Heart left ventricle (tissue), 16 donors: ENCODE measurements at regions of chr16 and their contacts with region 1.

Region 1: DNA sequence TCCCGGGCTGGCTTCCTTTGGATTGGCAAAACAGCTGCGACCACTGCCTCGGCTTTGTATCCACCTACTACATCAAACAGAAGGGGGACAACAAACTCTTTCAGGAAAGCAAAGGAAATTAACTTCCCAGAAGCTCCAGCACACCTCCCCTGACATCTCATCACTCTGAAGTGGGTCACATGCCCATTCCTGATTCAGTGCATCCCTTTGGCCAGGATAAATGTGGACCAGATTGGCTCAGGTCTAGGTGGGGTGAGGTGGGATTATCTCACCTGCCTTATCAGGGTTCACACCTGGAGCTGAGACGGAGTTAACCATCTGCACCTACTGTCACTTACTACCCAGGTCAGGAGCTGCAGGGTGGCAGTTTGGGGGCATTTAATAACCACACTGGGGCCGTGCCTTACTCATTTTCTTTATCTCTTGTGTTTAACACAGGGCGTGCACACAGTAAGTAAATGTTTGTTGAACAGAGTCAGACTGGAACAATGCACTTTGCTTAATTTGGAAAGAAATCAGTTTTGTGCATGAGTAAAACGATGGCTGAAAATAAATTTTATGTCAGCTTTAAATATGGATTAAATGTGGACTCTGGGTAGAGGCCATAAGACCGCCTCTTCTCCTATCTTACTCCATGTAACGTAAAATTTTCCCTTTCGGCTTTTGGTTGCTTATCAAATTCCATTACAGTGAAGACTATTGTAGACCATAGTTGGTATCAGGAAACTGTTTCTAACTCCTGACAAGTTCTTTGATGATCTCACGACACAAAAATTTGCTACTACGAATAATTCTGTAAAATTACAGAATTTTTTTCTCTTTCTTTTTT is 36.0 kb downstream of the IQCK start:
- DNase-seq: no peak
- ATAC-seq: peak in 3 of 4 donors; percentile 52 to 75 (median 63)
- H3K4me3 ChIP-seq: no peak overlapping the region
- H3K27ac ChIP-seq: peak overlapping the region in 11 of 12 donors; percentile 37 to 87 (median 71)
- H3K4me1 ChIP-seq: peaks cover 0 to 74% (median 40%) of the 10 kb centered on the region in 12 donors
- H3K27me3 ChIP-seq: no peaks in the 10 kb centered on the region
- CTCF ChIP-seq: no peak
- POLR2A ChIP-seq: no peak

Region 2: GRCh38 chr16:19696328-19696727 is 57.7 kb before region 1 on chr16:
- intact Hi-C with region 1: loop called in 2 of 10 experiments (anchors 5 to 10 kb)
- DNase-seq: peak; percentile 82 to 88 (median 86)
- ATAC-seq: peak; percentile 46 to 77 (median 61)
- H3K4me3 ChIP-seq: no peak overlapping the region
- H3K27ac ChIP-seq: peak overlapping the region; percentile 44 to 92 (median 82)
- H3K4me1 ChIP-seq: peaks cover 18 to 61% (median 45%) of the 10 kb centered on the region in 12 donors
- H3K27me3 ChIP-seq: no peaks in the 10 kb centered on the region
- CTCF ChIP-seq: no peak
- POLR2A ChIP-seq: no peak

Region 3: DNA sequence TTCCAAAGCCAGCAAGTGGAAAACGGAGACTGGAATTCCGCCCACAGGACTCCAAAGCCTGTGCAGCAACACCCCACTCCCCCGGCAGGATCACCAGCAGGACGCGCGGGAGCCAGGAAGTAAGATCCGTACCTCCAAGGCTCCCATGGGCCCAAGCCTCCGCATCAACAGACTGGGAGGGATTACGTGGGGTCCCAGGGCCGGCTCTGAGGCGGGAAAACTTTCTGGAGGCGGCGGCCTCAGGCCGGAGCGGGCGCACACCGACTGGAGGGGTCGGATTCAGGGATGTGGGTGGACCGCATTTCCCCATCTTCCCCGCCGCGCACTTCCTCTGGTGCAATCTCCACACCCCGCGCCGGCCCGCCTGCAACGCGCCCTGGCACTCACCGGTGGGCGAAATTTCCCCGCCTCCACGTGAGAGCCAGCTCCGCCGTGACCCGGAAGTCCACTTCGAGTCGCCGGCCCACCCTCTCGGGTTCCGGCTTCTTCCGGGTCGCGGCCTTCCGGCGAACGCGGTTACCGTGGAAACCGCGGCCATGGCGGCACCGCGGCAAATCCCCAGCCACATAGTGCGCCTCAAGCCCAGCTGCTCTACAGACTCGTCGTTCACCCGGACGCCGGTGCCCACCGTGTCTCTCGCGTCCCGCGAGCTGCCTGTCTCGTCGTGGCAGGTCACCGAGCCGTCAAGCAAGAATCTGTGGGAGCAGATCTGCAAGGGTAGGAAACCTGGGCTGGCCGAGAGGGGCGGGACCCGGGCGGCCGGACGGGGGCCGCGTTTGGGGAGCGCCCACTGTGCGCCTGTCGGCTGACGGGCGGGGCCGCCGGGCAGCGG is 36.0 kb before region 1 on chr16 and contains the starts of genes IQCK and KNOP1:
- intact Hi-C with region 1: loop called in 2 of 10 experiments (anchors 5 kb)
- DNase-seq: peak; percentile 92 to 94 (median 93)
- ATAC-seq: peak; percentile 93 to 98 (median 98)
- H3K4me3 ChIP-seq: peak within 1 kb of the TSS; percentile 67 to 99 (median 87)
- H3K27ac ChIP-seq: peak within 1 kb of the TSS in 11 of 12 donors; percentile 75 to 94 (median 85)
- H3K4me1 ChIP-seq: peaks cover 0 to 44% (median 35%) of the 10 kb centered on the region in 12 donors
- H3K27me3 ChIP-seq: no peaks in the 10 kb centered on the region
- CTCF ChIP-seq: peak in 2 of 12 donors; percentile 18 to 19
- POLR2A ChIP-seq: peak in 1 of 2 donors; percentile 67
- total RNA-seq, gene IQCK: 5.7 to 17.4 (median 9.0) TPM
- total RNA-seq, gene KNOP1: 6.3 to 11.5 (median 7.9) TPM

Region 4: DNA sequence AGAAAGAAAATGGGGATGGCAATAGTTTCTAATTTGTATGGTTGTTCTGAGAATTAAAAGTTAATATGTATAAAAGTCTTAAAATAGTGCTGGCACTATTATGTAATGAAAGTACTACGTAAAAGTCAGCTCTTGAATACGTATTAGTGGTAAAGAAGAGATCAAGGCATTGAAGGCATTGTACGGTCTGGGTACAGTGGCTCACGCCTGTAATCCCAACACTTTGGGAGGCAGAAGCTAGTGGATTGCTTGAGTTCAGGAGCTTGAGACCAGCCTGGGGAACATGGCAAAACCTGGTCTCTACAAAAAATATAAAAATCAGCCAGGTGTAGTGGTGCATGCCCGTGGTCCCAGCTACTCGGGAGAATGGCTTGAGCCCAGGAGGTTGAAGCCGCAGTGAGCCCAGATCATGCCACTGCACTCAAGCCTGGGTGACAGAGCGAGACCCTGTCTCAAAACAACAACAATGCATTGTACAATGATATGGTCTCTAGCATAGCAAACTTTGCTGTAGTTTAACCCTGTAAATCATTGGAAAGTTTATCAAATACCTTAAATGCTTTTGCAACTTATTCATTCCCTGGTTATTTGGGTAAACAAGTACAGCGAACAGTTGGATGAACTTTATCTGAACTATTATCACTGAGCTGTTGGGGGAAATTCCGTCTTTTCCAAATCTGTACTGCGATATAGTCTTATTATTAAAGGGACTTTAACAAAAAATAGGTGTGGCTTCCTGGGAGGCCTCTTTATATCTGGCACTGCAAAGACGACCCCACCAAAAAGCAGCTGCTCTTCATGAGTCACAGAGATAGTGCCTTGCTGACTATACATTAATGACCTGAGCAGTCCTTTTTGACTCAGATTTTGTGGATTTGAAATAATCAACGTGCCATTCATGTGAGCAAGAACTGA is 57.0 kb after region 1 on chr16:
- intact Hi-C with region 1: loop called in 2 of 10 experiments (anchors 5 to 10 kb)
- DNase-seq: no peak
- ATAC-seq: peak in 3 of 4 donors; percentile 23 to 48 (median 30)
- H3K4me3 ChIP-seq: no peak overlapping the region
- H3K27ac ChIP-seq: peak overlapping the region in 8 of 12 donors; percentile 2 to 68 (median 40)
- H3K4me1 ChIP-seq: peaks cover 0 to 38% (median 20%) of the 10 kb centered on the region in 12 donors
- H3K27me3 ChIP-seq: no peaks in the 10 kb centered on the region
- CTCF ChIP-seq: no peak
- POLR2A ChIP-seq: no peak